ENCODE measurements at regions of chr19 and their contacts with region 1.

Region 1: DNA sequence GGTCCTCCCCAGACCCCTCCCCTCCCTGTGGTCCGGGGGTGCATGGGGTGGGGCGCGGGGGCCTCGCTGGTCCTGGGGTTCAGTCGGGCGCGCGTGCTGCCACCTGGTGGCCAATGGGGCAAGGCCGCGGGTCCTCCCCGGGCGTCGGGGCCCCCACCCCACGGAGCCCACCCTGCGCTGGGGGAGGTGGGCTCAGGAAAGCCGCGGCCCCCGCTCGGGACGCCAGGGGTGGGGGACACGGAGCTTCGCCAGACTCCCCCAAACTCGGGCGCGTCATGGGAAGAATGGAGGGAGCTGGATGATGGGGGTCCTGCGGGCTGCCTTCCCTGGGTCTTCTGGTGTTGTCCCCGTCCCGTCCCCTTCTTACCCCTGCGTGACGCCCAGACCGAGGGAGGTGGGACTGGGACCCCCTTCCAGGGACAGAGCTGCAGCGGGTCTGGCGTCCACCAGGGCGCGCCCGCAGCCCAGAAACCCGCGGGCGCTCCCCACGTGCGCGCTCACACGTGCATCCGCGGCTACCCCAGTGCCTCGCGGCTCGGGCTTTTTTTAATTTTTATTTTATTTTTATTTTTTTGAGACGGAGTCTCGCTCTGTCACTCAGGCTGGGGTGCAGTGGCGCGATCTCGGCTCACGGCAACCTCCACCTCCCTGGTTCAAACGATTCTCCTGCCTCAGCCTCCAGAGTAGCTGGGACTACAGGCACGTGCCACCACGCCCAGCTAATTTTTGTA is 19.8 kb upstream of the TCF3 start:
- DNase-seq: peak; percentile 52
- H3K4me3 Mint-ChIP-seq: peak overlapping the region; percentile 56
- H3K27ac Mint-ChIP-seq: no peak overlapping the region
- H3K4me1 Mint-ChIP-seq: peaks cover 16% of the 10 kb centered on the region
- H3K27me3 Mint-ChIP-seq: peaks cover 38% of the 10 kb centered on the region
- CTCF ChIP-seq: peak; percentile 94

Region 2: GRCh38 chr19:1492474-1493006 is 179.7 kb before region 1 on chr19:
- CTCF ChIA-PET with region 1: no interaction called
- POLR2A ChIA-PET with region 1: no interaction called
- intact Hi-C with region 1: no loop called
- DNase-seq: peak; percentile 58
- H3K4me3 Mint-ChIP-seq: peak overlapping the region; percentile 79
- H3K27ac Mint-ChIP-seq: no peak overlapping the region
- H3K4me1 Mint-ChIP-seq: peaks cover 7% of the 10 kb centered on the region
- H3K27me3 Mint-ChIP-seq: no peaks in the 10 kb centered on the region
- CTCF ChIP-seq: no peak

Region 3: DNA sequence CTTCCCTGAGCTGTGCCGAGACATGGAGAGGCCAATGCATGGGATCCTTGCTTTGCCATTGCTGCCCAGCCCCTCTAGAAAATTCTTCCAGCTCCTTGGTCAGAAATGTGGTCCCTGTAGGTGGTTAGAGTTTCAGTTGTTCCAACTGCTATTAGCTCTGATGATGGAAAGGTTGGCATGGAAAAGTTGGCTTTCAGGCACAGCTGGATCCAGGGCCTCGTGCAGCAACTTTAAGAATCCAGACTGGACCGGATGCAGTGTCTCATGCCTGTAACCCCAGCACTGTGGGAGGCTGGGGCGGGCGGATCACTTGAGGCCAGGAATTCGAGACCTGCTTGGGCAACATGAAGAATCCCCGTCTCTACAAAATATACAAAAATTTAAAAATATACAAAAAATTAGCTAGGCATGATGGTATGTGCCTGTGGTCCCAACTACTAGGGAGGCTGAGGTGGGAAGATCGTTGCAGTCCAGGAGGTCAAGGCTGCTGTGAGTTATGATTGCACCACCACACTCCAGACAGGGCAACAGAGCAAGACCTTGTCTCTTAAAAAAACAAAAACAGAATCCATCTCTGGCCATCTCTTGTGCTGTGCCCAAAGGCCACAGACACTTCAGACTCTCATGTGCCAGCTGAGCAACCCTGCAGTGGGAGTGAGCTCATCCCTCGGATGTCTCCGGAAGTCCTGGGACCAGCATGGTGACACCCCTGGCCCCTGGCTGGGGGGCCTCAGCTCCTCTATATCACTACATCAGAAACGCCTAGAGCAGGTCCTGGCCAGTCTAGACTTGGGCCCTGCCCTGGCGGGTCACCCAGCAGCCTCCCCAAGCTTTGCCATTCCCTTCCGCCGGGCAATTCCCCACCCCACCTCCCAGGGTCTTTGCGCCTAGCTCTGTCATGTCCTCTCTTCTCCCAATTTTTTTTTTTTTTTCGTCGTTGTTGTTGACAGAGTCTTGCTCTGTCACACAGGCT is 120.8 kb before region 1 on chr19:
- CTCF ChIA-PET with region 1: interaction called, 52 read pairs
- POLR2A ChIA-PET with region 1: interaction called, 3 read pairs
- intact Hi-C with region 1: loop called (anchors 2 kb)
- DNase-seq: no peak
- H3K4me3 Mint-ChIP-seq: no peak overlapping the region
- H3K27ac Mint-ChIP-seq: no peak overlapping the region
- H3K4me1 Mint-ChIP-seq: peaks cover 2% of the 10 kb centered on the region
- H3K27me3 Mint-ChIP-seq: no peaks in the 10 kb centered on the region
- CTCF ChIP-seq: no peak

Region 4: DNA sequence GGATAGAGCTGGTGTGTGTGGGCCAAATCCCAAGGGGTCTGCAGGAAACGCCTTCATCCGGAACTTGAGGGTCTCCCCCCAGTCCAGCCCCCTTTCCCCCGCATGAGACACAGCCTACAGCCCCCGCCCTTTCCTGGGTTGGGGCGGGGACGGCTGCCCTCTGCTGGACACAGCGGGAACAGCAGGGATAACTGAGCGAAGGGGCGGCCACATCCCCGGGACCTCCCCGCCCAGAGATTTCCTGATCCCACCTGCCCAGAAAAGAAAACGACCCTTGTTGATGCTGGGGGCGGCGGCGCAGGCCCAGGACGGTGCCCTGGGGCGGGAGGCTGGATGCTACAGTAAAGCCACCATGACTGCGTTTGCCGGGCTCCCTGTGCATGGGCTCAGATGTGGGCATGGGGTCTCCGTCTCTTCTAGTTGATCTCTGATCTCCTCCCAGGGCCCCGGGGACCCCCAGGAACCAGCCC is 95.3 kb after region 1 on chr19:
- CTCF ChIA-PET with region 1: interaction called, 54 read pairs
- POLR2A ChIA-PET with region 1: interaction called, 3 read pairs
- intact Hi-C with region 1: loop called (anchors 1 kb)
- DNase-seq: peak; percentile 48
- H3K4me3 Mint-ChIP-seq: no peak overlapping the region
- H3K27ac Mint-ChIP-seq: no peak overlapping the region
- H3K4me1 Mint-ChIP-seq: peaks cover 4% of the 10 kb centered on the region
- H3K27me3 Mint-ChIP-seq: peaks cover 31% of the 10 kb centered on the region
- CTCF ChIP-seq: peak; percentile 94

Region 5: DNA sequence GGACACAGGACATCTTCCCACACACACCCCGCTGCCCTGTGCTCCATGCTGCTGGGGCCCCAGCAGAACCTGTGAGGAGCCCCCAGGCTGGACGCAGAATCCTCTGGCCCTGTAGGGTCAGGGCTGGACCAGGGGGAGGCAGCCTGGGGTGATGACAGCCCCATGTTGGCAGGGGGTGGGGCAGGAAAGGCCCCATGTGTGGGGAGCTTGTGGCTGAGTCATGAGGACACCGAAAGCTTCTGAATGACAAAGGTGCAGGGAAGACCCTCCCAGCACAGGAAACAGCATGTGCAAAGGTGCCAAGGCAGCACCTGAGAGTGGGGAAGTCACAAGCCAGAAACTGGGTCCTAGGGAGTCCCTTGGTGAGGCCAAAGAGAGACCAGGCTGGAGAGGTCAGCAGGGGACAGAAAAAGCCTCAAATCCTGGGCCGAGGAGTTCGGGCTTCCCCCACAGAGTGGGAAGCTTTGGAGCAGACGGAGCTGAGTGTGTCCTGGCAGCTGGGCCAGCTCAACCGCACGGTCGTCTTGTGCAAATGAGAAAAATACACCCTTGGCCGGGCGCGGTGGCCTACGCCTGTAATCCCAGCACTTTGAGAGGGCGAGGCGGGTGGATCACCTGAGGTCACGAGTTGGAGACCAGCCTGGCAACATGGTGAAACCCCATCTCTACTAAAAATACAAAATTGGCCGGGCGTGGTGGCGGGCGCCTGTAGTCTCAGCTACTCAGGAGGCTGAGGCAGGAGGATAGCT is 122.4 kb after region 1 on chr19:
- CTCF ChIA-PET with region 1: interaction called, 129 read pairs
- POLR2A ChIA-PET with region 1: interaction called, 3 read pairs
- intact Hi-C with region 1: loop called (anchors 2 kb)
- DNase-seq: no peak
- H3K4me3 Mint-ChIP-seq: no peak overlapping the region
- H3K27ac Mint-ChIP-seq: no peak overlapping the region
- H3K4me1 Mint-ChIP-seq: peaks cover 14% of the 10 kb centered on the region
- H3K27me3 Mint-ChIP-seq: no peaks in the 10 kb centered on the region
- CTCF ChIP-seq: no peak

Region 6: DNA sequence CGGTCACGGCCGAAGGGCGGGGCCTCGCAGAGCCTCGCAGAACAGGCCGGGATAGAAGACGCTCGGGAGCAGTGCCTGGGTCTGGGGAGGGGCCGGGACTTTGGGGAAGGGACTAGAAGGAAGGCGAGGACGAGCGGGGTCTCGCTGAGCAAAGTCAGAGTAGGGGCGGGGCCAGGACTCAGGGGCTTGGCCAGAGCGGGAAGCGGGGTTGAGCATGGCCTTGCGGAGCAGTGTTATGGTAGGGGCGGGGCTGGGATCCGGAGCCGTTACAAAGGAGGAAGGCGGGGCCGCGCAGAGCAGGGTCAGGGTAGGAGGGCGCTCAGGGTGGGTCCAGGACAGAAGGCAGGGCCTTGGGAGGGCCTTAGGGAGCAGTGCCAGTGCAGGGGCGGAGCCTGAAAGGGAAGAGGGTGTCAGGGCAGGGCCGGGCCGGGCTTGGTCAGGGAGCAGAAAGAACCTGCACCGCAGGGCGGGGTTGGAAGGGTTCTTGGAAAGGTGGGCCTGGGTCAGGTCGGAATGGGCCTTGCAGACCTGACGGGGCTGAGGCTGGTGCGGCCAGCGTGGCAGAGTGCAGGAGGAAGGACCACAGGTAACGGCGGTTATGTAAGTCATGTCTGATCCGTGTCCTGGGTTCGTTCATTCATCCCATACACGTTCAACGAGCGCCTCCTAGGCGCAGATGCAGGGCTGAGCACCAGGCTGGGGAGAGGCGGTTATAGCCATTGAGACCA is 140.4 kb after region 1 on chr19:
- CTCF ChIA-PET with region 1: interaction called, 9 read pairs
- POLR2A ChIA-PET with region 1: no interaction called
- intact Hi-C with region 1: loop called (anchors 1 kb)
- DNase-seq: peak; percentile 99
- H3K4me3 Mint-ChIP-seq: peak overlapping the region; percentile 93
- H3K27ac Mint-ChIP-seq: peak overlapping the region; percentile 98
- H3K4me1 Mint-ChIP-seq: peaks cover 16% of the 10 kb centered on the region
- H3K27me3 Mint-ChIP-seq: no peaks in the 10 kb centered on the region
- CTCF ChIP-seq: peak; percentile 66